Activated CD4-positive, alpha-beta memory T cell treated with anti-CD3 and anti-CD28 coated beads for 36 hours (primary cell): ENCODE measurements at regions of chr14 and their contacts with region 1.

Region 1: DNA sequence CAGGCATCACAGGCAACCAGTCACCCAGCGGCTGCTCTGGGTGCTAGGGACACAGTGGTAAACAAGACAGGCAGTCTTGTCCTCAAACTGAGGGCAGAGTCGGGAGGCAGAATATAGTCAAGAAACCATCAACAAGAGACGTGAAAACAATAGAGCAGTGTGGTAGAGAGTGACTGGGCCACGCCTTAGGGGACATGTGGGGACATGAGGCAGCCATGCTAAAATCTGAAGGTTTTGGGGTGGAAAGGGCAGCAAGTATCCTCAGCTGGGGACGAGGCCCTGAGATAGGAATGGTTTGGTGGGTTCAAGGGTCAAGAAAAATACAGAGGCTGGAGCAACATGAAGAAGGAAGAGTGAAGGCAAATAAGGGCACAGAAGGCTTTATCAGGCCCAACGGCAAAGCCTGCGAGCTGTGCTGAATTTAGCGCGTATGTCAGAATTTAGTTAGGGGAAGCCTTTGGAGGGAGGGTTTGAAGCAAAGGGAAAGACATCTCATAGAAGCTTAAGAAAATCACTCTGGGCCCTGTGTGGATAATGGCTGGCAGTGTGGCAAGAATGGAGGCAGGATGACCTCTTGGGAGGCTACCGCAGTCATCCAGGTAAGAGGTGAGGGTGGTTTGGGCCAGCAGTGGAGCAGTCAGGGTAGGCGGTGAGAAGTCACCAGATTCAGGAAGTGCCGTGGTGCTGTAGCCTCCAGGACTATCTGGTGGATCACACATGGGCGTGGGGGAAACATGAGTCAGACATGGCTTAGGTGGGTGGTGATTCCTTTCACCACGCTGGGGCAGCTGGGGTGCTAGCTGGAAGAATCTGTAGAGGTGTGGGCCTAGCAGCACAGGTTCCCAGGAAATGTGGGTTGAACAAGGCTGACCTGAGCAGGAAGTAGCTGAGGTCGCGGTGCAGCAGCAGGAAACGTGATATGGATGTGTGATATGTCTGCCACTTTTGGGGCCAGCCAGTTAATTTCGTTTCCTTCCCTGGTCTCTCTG is 3.0 kb downstream of the EVL start:
- DNase-seq: peak; percentile 95
- H3K4me3 Mint-ChIP-seq: peak overlapping the region; percentile 81
- H3K27ac Mint-ChIP-seq: peak overlapping the region; percentile 98
- H3K4me1 Mint-ChIP-seq: peaks cover 81% of the 10 kb centered on the region
- H3K27me3 Mint-ChIP-seq: no peaks in the 10 kb centered on the region

Region 2: GRCh38 chr14:99989032-99989431 is 79.2 kb before region 1 on chr14:
- CTCF ChIA-PET with region 1: no interaction called
- POLR2A ChIA-PET with region 1: no interaction called
- intact Hi-C with region 1: no loop called
- DNase-seq: no peak
- H3K4me3 Mint-ChIP-seq: no peak overlapping the region
- H3K27ac Mint-ChIP-seq: no peak overlapping the region
- H3K4me1 Mint-ChIP-seq: no peaks in the 10 kb centered on the region
- H3K27me3 Mint-ChIP-seq: no peaks in the 10 kb centered on the region

Region 3: GRCh38 chr14:100004392-100004791 is 63.9 kb before region 1 on chr14:
- CTCF ChIA-PET with region 1: no interaction called
- POLR2A ChIA-PET with region 1: no interaction called
- intact Hi-C with region 1: no loop called
- DNase-seq: no peak
- H3K4me3 Mint-ChIP-seq: no peak overlapping the region
- H3K27ac Mint-ChIP-seq: no peak overlapping the region
- H3K4me1 Mint-ChIP-seq: no peaks in the 10 kb centered on the region
- H3K27me3 Mint-ChIP-seq: no peaks in the 10 kb centered on the region

Region 4: GRCh38 chr14:100056964-100057795 is 11.1 kb before region 1 on chr14:
- CTCF ChIA-PET with region 1: interaction called, 20 read pairs
- POLR2A ChIA-PET with region 1: interaction called, 302 read pairs
- intact Hi-C with region 1: loop called (anchors 1 kb)
- DNase-seq: no peak
- H3K4me3 Mint-ChIP-seq: no peak overlapping the region
- H3K27ac Mint-ChIP-seq: peak overlapping the region; percentile 56
- H3K4me1 Mint-ChIP-seq: peaks cover 49% of the 10 kb centered on the region
- H3K27me3 Mint-ChIP-seq: no peaks in the 10 kb centered on the region

Region 5: DNA sequence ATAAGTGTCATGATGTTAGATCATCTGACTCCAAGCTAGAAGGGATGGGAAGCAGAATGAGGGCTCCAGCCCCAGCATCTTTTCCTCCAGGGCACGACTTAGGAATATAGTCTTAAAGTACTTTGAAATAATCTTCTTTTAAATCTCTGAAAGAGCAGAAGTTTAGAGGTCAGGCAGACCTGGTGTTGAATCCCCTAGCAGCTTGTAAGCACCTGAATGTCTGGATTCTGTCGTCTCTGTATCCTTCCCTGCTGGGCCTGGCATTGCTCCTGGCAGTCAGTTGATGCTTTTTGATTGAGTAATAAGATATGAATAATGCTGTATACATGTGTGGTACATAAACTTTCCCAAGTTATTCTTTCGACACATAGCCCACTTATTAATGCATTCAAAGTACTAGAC is 28.3 kb after region 1 on chr14:
- CTCF ChIA-PET with region 1: interaction called, 573 read pairs
- POLR2A ChIA-PET with region 1: interaction called, 200 read pairs
- intact Hi-C with region 1: loop called (anchors 1 kb)
- DNase-seq: peak; percentile 5
- H3K4me3 Mint-ChIP-seq: no peak overlapping the region
- H3K27ac Mint-ChIP-seq: peak overlapping the region; percentile 38
- H3K4me1 Mint-ChIP-seq: peaks cover 83% of the 10 kb centered on the region
- H3K27me3 Mint-ChIP-seq: no peaks in the 10 kb centered on the region

Region 6: GRCh38 chr14:100221533-100222223 is 153.4 kb after region 1 on chr14:
- CTCF ChIA-PET with region 1: interaction called, 4 read pairs
- POLR2A ChIA-PET with region 1: no interaction called
- intact Hi-C with region 1: loop called (anchors 10 kb)
- DNase-seq: peak; percentile 82
- H3K4me3 Mint-ChIP-seq: no peak overlapping the region
- H3K27ac Mint-ChIP-seq: no peak overlapping the region
- H3K4me1 Mint-ChIP-seq: peaks cover 4% of the 10 kb centered on the region
- H3K27me3 Mint-ChIP-seq: no peaks in the 10 kb centered on the region